Activated B cell treated with CpG ODN at 0.5 μM for 24 hours (primary cell): ENCODE measurements at regions of chr2 and their contacts with region 1.

Region 1: GRCh38 chr2:199488772-199489400 is 31.1 kb upstream of the SATB2 start:
- DNase-seq: no peak
- ATAC-seq: no peak
- H3K4me3 Mint-ChIP-seq: no peak overlapping the region
- H3K27ac Mint-ChIP-seq: no peak overlapping the region
- H3K4me1 Mint-ChIP-seq: no peaks in the 10 kb centered on the region
- H3K27me3 Mint-ChIP-seq: peaks cover 10% of the 10 kb centered on the region
- CTCF ChIP-seq: no peak

Region 2: DNA sequence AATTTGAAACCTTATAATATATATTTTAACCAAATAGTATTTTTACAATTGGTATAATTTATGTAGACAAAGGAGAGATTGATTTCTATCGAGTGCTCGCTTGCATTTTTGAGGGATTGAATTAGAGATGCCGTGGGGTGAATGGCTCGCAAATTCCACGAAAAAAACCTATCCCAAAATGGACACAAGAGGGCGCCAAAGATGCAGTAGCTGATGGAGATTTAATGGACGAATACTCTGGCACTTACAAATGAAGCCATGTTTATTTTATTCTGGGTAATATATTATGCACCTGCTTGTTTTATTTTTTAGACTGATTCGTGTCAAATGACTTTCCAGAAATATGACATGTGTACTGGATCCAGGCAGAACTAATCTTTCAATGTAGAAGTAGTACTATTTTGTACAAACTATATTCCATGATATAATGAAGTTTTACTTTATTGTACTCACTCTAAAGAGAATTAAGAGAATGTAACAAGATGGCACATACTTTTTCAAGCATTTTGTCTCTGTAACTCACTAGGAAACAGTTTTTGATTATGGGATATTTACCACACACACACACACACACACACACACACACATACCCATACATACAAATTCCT is 1179.1 kb before region 1 on chr2:
- CTCF ChIA-PET with region 1: interaction called, 7 read pairs
- POLR2A ChIA-PET with region 1: no interaction called
- intact Hi-C with region 1: loop called (anchors 1 kb)
- DNase-seq: no peak
- ATAC-seq: peak; percentile 52
- H3K4me3 Mint-ChIP-seq: no peak overlapping the region
- H3K27ac Mint-ChIP-seq: no peak overlapping the region
- H3K4me1 Mint-ChIP-seq: no peaks in the 10 kb centered on the region
- H3K27me3 Mint-ChIP-seq: peaks cover 10% of the 10 kb centered on the region
- CTCF ChIP-seq: no peak

Region 3: GRCh38 chr2:198374375-198375082 is 1114.4 kb before region 1 on chr2:
- CTCF ChIA-PET with region 1: interaction called, 3 read pairs
- POLR2A ChIA-PET with region 1: no interaction called
- intact Hi-C with region 1: loop called (anchors 5 kb)
- DNase-seq: no peak
- ATAC-seq: no peak
- H3K4me3 Mint-ChIP-seq: no peak overlapping the region
- H3K27ac Mint-ChIP-seq: no peak overlapping the region
- H3K4me1 Mint-ChIP-seq: peaks cover 7% of the 10 kb centered on the region
- H3K27me3 Mint-ChIP-seq: peaks cover 3% of the 10 kb centered on the region
- CTCF ChIP-seq: no peak

Region 4: GRCh38 chr2:198657512-198658121 is 831.3 kb before region 1 on chr2:
- CTCF ChIA-PET with region 1: interaction called, 3 read pairs
- POLR2A ChIA-PET with region 1: no interaction called
- intact Hi-C with region 1: loop called (anchors 10 kb)
- DNase-seq: no peak
- ATAC-seq: no peak
- H3K4me3 Mint-ChIP-seq: no peak overlapping the region
- H3K27ac Mint-ChIP-seq: no peak overlapping the region
- H3K4me1 Mint-ChIP-seq: no peaks in the 10 kb centered on the region
- H3K27me3 Mint-ChIP-seq: no peaks in the 10 kb centered on the region
- CTCF ChIP-seq: no peak

Region 5: DNA sequence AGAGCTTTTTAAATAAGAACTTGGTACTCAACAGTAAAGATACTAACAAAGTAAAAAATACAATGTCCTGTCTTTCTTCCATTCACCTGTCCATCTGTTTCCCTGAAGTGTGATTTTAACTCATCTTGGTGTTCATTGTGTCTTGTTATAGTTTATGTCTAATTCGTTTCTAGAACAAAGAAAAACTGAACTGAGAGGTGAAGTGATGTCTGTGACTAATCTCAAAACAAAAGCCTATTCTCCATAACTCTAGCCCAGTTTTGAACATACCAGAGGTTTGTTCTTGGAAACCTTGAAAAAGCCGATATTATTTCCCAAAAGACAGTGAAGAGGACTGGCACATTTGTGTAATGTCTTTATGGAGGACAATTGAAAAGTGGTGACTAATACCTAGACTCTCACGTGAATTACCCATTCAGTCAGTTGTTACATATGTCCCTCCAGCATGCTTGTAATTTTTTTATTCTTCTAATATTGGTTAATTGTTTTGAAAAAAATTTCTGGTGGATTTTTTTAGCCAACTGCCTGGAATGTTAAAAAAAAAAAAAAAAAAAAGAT is 757.0 kb before region 1 on chr2:
- CTCF ChIA-PET with region 1: no interaction called
- POLR2A ChIA-PET with region 1: no interaction called
- intact Hi-C with region 1: no loop called
- DNase-seq: no peak
- ATAC-seq: no peak
- H3K4me3 Mint-ChIP-seq: no peak overlapping the region
- H3K27ac Mint-ChIP-seq: no peak overlapping the region
- H3K4me1 Mint-ChIP-seq: no peaks in the 10 kb centered on the region
- H3K27me3 Mint-ChIP-seq: no peaks in the 10 kb centered on the region
- CTCF ChIP-seq: no peak